WTC11 (cell line): ENCODE measurements at regions of chr2 and their contacts with region 1.

Region 1: GRCh38 chr2:158544998-158545397 is 88.2 kb downstream of the PKP4 start:
- DNase-seq: no peak
- ATAC-seq: no peak; the same call in 1 of the 2 replicates
- H3K4me3 Mint-ChIP-seq: no peak overlapping the region
- H3K27ac Mint-ChIP-seq: no peak overlapping the region
- H3K4me1 Mint-ChIP-seq: peaks cover 14% of the 10 kb centered on the region
- H3K27me3 Mint-ChIP-seq: no peaks in the 10 kb centered on the region
- CTCF ChIP-seq: no peak

Region 2: DNA sequence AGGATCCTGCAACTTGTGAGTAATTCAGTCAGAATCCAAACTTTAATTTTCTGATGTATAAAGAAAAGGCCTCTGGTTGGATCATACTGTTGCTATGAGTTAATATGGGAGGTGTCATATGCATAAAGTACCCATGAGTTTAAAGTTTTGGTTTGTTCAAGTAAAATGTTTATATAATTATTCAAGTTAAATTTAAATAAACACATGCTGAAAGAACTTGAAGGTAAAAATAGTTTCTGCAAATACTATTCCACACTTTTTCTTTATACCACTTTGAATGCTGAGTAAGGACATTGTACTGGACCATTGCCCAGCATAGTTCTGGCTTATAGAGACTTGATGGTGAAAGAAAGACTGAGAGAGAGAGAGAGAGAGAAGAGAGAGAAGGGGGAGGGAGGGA is 57.6 kb before region 1 on chr2:
- CTCF ChIA-PET with region 1: no interaction called
- POLR2A ChIA-PET with region 1: no interaction called
- DNase-seq: no peak
- ATAC-seq: no peak
- H3K4me3 Mint-ChIP-seq: no peak overlapping the region
- H3K27ac Mint-ChIP-seq: no peak overlapping the region
- H3K4me1 Mint-ChIP-seq: peaks cover 75% of the 10 kb centered on the region
- H3K27me3 Mint-ChIP-seq: no peaks in the 10 kb centered on the region
- CTCF ChIP-seq: no peak

Region 3: GRCh38 chr2:158529379-158530259 is 15.4 kb before region 1 on chr2:
- CTCF ChIA-PET with region 1: interaction called, 10 read pairs
- POLR2A ChIA-PET with region 1: interaction called, 3 read pairs
- DNase-seq: no peak
- ATAC-seq: no peak
- H3K4me3 Mint-ChIP-seq: no peak overlapping the region
- H3K27ac Mint-ChIP-seq: peak overlapping the region; percentile 28; the same call in 1 of the 2 replicates
- H3K4me1 Mint-ChIP-seq: peaks cover 25% of the 10 kb centered on the region
- H3K27me3 Mint-ChIP-seq: no peaks in the 10 kb centered on the region
- CTCF ChIP-seq: no peak